H1 (cell line): ENCODE measurements at regions of chr2 and their contacts with region 1.

Region 1: DNA sequence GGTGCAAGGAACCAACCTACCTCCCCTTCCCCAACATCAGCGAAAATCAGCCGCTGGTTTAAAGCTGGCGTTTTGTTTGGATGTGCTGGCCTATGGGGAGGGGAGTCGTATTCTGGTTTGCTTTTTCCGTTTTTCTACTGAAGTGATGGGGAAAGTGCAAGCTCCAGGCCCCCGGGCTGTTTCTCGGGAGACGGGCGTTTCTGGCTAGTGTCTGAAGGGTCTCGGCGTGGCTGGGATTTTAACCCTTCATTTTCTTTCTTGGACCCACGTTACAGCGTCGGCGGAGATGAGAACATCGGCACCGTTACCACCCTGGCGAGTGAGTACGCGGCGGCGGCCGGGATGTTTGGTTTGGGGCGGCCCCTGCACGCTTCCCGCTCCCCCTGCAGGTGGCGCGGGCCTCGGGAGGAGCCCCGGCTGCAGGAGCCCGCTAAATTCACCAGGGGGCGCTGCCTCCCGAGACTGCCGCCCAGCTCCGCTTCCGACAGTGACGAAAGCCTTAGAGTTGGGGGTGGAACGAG is 70.7 kb downstream of the PLB1 start:
- DNase-seq: peak; percentile 57 to 97
- H3K4me3 ChIP-seq: peak overlapping the region; percentile 37 to 72 (median 66); a peak in 7 of 8 replicates
- H3K27ac ChIP-seq: no peak overlapping the region
- H3K4me1 ChIP-seq: no peaks in the 10 kb centered on the region; a peak in 1 of 7 replicates
- H3K27me3 ChIP-seq: peaks cover 0 to 5% (median 1%) of the 10 kb centered on the region in 4 experiments; a peak in 1 of 7 replicates
- CTCF ChIP-seq: peak; percentile 90 to 100 (median 92)
- EP300 ChIP-seq: no peak
- POLR2A ChIP-seq: peak in 1 of 2 experiments; percentile 50; a peak in 1 of 3 replicates
- RAD21 ChIP-seq: peak; percentile 82 to 85

Region 2: GRCh38 chr2:28583899-28584553 is 17.4 kb after region 1 on chr2:
- CTCF ChIA-PET with region 1: interaction called, 55 read pairs
- POLR2A ChIA-PET with region 1: no interaction called
- DNase-seq: peak in 1 of 2 experiments; percentile 21
- H3K4me3 ChIP-seq: no peak overlapping the region
- H3K27ac ChIP-seq: no peak overlapping the region
- H3K4me1 ChIP-seq: peaks cover 0 to 5% (median 0%) of the 10 kb centered on the region in 4 experiments; a peak in 4 of 7 replicates
- H3K27me3 ChIP-seq: no peaks in the 10 kb centered on the region
- CTCF ChIP-seq: no peak
- EP300 ChIP-seq: no peak
- POLR2A ChIP-seq: no peak
- RAD21 ChIP-seq: no peak